ENCODE measurements at regions of chr20 and their contacts with region 1.

Region 1: GRCh38 chr20:20824924-20825584 is 112.6 kb upstream of the RALGAPA2 start:
- DNase-seq: peak; percentile 59
- H3K4me3 Mint-ChIP-seq: no peak overlapping the region
- H3K27ac Mint-ChIP-seq: no peak overlapping the region
- H3K4me1 Mint-ChIP-seq: peaks cover 2% of the 10 kb centered on the region
- H3K27me3 Mint-ChIP-seq: peaks cover 13% of the 10 kb centered on the region

Region 2: GRCh38 chr20:20664795-20665589 is 160.1 kb before region 1 on chr20:
- CTCF ChIA-PET with region 1: interaction called, 23 read pairs
- POLR2A ChIA-PET with region 1: no interaction called
- intact Hi-C with region 1: loop called (anchors 1 kb)
- DNase-seq: no peak
- H3K4me3 Mint-ChIP-seq: no peak overlapping the region
- H3K27ac Mint-ChIP-seq: no peak overlapping the region
- H3K4me1 Mint-ChIP-seq: peaks cover 6% of the 10 kb centered on the region
- H3K27me3 Mint-ChIP-seq: no peaks in the 10 kb centered on the region

Region 3: GRCh38 chr20:20860078-20860806 is 35.2 kb after region 1 on chr20:
- CTCF ChIA-PET with region 1: no interaction called
- POLR2A ChIA-PET with region 1: no interaction called
- intact Hi-C with region 1: no loop called
- DNase-seq: peak; percentile 91
- H3K4me3 Mint-ChIP-seq: no peak overlapping the region
- H3K27ac Mint-ChIP-seq: no peak overlapping the region
- H3K4me1 Mint-ChIP-seq: no peaks in the 10 kb centered on the region
- H3K27me3 Mint-ChIP-seq: peaks cover 14% of the 10 kb centered on the region